A549 (cell line): ENCODE measurements at regions of chr6 and their contacts with region 1.

Region 1: DNA sequence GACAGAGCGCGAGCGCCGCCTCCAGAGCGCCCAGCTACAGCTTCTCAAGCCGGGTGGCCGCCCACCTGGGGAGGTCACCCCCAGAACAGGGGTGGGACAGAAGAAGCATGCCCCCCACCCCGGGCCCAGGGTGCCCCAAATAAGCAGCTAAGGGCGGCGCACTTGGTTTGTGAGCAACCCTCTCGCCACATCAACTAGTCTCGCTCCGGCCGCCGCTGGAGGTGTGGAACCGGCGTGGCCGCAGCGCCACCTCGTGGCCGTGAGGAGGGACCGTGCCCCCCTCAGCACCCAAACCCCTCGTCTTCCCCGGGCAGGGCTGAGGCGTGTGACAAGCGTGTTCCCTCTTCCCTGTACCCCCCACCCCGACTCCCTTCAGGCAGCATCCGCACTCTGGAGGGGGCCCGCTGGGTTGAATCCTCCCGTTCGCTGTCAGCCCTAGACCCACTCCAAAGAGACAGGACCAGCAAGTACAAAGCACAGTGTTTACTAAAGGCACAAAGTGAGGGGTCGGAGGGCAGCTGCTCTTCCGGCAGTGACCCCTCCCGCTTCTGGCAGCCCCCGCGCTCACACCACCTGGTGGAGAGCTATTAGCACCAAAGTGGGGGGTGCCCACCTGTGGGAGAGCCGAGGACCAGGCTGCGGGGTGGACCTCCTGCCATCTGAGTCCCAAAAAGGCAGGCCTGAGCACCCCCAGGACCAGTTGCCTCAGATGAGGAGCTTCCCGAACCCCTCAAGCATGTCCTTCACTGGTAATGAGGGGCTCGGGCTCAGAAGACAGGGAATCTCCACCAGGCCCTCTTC is 45.4 kb downstream of the MDFI start:
- DNase-seq: peak; percentile 53 to 65
- ATAC-seq: peak; percentile 84 to 90
- H3K4me3 ChIP-seq: no peak overlapping the region
- H3K27ac ChIP-seq: peak overlapping the region in 1 of 2 experiments; percentile 56; a peak in 2 of 6 replicates
- H3K4me1 ChIP-seq: 0 out of 3 replicates have a peak, but pooled peaks cover 3% of the 10 kb centered on the region
- CTCF ChIP-seq: peak; percentile 74
- EP300 ChIP-seq: no peak
- POLR2A ChIP-seq: no peak
- RAD21 ChIP-seq: peak; percentile 75 to 83

Region 2: DNA sequence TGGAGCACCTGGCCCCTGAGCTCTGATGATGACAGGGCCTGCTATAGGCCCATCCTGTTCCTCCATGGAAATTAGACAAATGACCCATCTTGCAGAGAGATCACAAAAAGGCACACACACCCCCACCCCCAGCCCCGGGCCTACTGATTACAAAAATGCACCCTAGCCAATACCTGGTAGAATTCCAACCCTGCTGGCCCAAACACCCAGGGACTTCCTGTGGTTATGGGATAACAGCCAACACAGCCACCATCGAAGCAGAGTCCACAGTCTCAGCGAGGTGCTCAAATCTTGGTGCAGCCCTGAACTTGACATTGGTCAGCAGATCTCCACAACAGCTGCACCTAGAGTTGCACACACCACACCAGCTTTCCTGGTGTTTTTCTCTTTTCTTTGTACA is 331.3 kb before region 1 on chr6:
- CTCF ChIA-PET with region 1: interaction called, 17 read pairs
- POLR2A ChIA-PET with region 1: no interaction called
- DNase-seq: no peak
- ATAC-seq: no peak
- H3K4me3 ChIP-seq: no peak overlapping the region
- H3K27ac ChIP-seq: no peak overlapping the region
- H3K4me1 ChIP-seq: no peaks in the 10 kb centered on the region
- CTCF ChIP-seq: no peak
- EP300 ChIP-seq: no peak
- POLR2A ChIP-seq: no peak
- RAD21 ChIP-seq: no peak

Region 3: GRCh38 chr6:41602864-41603608 is 80.7 kb before region 1 on chr6:
- CTCF ChIA-PET with region 1: interaction called, 181 read pairs
- POLR2A ChIA-PET with region 1: interaction called, 6 read pairs
- DNase-seq: peak; percentile 68 to 80
- ATAC-seq: peak; percentile 83 to 87
- H3K4me3 ChIP-seq: peak overlapping the region; percentile 23; the same call in 1 of the 3 replicates
- H3K27ac ChIP-seq: peak overlapping the region; percentile 59 to 80; a peak in 5 of 6 replicates
- H3K4me1 ChIP-seq: peaks cover 4% of the 10 kb centered on the region; the same call in 1 of the 3 replicates
- CTCF ChIP-seq: peak; percentile 79
- EP300 ChIP-seq: no peak
- POLR2A ChIP-seq: no peak
- RAD21 ChIP-seq: peak; percentile 82 to 83

Region 4: GRCh38 chr6:41672821-41673703 is 10.6 kb before region 1 on chr6:
- CTCF ChIA-PET with region 1: interaction called, 11 read pairs
- POLR2A ChIA-PET with region 1: no interaction called
- DNase-seq: no peak
- ATAC-seq: no peak
- H3K4me3 ChIP-seq: no peak overlapping the region
- H3K27ac ChIP-seq: no peak overlapping the region
- H3K4me1 ChIP-seq: no peaks in the 10 kb centered on the region
- CTCF ChIP-seq: no peak
- EP300 ChIP-seq: no peak
- POLR2A ChIP-seq: no peak
- RAD21 ChIP-seq: no peak

Region 5: GRCh38 chr6:41775293-41776181 is 91.8 kb after region 1 on chr6:
- CTCF ChIA-PET with region 1: interaction called, 18 read pairs
- POLR2A ChIA-PET with region 1: no interaction called
- DNase-seq: peak; percentile 74 to 82
- ATAC-seq: peak; percentile 52 to 74; a peak in 5 of 6 replicates
- H3K4me3 ChIP-seq: no peak overlapping the region
- H3K27ac ChIP-seq: no peak overlapping the region
- H3K4me1 ChIP-seq: peaks cover 7% of the 10 kb centered on the region; the same call in 2 of the 3 replicates
- CTCF ChIP-seq: peak; percentile 66
- EP300 ChIP-seq: no peak
- POLR2A ChIP-seq: no peak
- RAD21 ChIP-seq: peak; percentile 70 to 84